ENCODE measurements at regions of chr3 and their contacts with region 1.

Region 1: DNA sequence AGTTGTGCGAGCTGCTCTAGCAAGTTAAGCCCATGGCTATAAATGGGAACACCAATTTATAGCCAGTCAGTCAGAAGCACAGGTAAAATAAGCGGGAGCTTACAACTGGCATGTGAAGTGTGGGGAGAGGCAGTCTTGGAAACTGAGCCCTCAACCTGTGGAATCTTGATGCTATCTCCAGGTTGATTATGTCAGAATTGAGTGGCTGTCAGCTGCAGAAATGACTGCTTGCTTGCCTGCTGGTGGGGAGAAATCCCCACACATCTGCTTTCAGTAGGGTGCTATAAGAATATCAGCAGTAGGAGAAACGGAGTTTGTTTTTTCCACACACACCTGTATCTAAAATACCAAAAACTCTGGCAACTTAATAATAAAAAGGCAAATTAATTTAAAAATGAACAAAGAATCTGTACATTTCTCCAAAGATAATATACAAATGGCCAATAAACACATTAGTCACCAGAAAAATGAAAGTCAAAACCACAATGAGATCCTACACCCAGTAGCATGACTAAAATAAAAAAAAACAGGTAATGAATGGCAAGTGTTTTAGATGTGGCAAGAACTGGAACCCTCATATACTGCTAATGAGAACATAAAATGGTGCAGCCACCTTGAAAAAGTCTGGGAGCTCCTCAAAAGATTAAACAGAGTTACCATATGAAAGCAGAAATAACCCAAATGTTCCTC is 26.0 kb upstream of the MAP4 start:
- DNase-seq: no peak
- H3K4me3 Mint-ChIP-seq: no peak overlapping the region
- H3K27ac Mint-ChIP-seq: peak overlapping the region; percentile 22
- H3K4me1 Mint-ChIP-seq: peaks cover 13% of the 10 kb centered on the region
- H3K27me3 Mint-ChIP-seq: no peaks in the 10 kb centered on the region

Region 2: DNA sequence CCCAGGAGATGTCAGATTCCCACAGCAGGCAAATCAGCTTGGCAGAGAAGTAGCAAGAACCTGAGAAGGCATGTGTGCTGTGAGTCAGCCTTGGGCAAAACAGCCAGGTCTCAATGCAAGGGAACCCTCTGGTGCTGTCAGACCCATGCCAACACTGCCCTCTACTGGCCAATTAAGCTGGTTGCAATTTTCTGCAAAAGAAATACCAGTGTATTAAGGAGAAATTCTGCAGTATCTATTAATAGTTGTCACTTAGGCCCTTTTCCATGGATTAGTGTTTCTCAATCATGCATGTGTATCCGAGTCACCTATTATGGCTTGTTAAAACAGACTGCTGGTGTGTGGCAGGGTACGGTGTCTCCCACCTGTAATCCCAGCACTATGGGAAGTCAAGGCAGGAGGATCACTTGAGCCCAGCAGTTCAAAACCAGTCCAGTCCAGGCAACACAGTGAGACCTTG is 52.2 kb before region 1 on chr3:
- intact Hi-C with region 1: no loop called
- DNase-seq: peak; percentile 91
- H3K4me3 Mint-ChIP-seq: no peak overlapping the region
- H3K27ac Mint-ChIP-seq: no peak overlapping the region
- H3K4me1 Mint-ChIP-seq: peaks cover 5% of the 10 kb centered on the region
- H3K27me3 Mint-ChIP-seq: no peaks in the 10 kb centered on the region

Region 3: GRCh38 chr3:48112813-48113212 is 70.6 kb after region 1 on chr3:
- intact Hi-C with region 1: loop called (anchors 1 kb)
- DNase-seq: no peak
- H3K4me3 Mint-ChIP-seq: peak overlapping the region; percentile 6
- H3K27ac Mint-ChIP-seq: peak overlapping the region; percentile 35
- H3K4me1 Mint-ChIP-seq: peaks cover 12% of the 10 kb centered on the region
- H3K27me3 Mint-ChIP-seq: no peaks in the 10 kb centered on the region

Measured in activated CD4-positive, alpha-beta T cell treated with anti-CD3 and anti-CD28 coated beads, Interleukin-2, amount 10 ng/mL, durations not matched to agents 24 days and 14 days (primary cell).